ENCODE measurements at regions of chr4 and their contacts with region 1.

Region 1: DNA sequence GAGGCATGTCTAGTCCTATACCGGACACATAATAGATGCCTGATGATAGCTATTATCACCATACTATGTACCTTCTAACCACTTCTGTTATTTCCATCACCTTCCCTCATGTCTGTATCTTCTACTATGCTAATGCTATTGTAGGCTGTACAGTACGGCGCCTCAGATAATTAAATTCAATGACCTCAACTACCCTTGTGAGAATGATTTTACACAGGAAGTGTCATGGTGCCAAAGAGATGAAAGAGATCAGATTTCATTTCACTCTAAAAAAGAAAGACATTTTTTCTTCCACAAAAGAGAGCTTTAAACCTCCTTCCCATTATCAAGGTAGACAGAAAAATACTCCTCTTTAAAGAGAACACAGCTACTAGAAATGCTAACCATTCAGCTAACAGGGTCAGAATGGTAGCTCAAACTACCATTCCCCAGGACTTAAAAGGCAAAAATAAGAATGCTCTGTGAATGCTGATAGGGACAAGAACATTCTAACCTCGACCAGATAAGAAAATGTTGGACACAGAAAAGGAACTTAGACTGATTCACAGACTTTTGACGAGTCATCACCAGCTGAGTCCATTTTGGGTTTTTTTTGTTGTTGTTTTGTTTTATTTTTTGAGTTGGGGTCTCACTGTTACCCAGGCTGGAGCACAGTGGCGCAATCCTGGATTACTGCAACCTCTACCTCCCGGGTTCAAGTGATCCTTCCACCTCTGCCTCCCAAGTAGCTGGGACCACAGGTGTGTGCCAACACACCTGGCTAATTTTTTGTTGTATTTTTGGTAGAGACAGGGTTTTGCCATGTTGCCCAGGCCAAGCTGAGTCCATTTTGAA is 99.2 kb upstream of the RAPGEF2 start:
- DNase-seq: peak; percentile 81
- H3K4me3 ChIP-seq: peak overlapping the region in 1 of 3 experiments; percentile 49
- H3K27ac ChIP-seq: peak overlapping the region; percentile 94
- H3K4me1 ChIP-seq: peaks cover 21% of the 10 kb centered on the region
- H3K27me3 ChIP-seq: no peaks in the 10 kb centered on the region
- CTCF ChIP-seq: no peak
- POLR2A ChIP-seq: no peak

Region 2: GRCh38 chr4:158521484-158522088 is 482.1 kb before region 1 on chr4 and contains the start of gene RXFP1:
- CTCF ChIA-PET with region 1: no interaction called
- POLR2A ChIA-PET with region 1: no interaction called
- dilution Hi-C with region 1: no loop called
- intact Hi-C with region 1: no loop called
- DNase-seq: peak; percentile 28
- H3K4me3 ChIP-seq: peak within 1 kb of the TSS in 1 of 3 experiments; percentile 35
- H3K27ac ChIP-seq: no peak within 1 kb of the TSS
- H3K4me1 ChIP-seq: no peaks in the 10 kb centered on the region
- H3K27me3 ChIP-seq: no peaks in the 10 kb centered on the region
- CTCF ChIP-seq: no peak
- POLR2A ChIP-seq: no peak
- total RNA-seq, gene RXFP1: not detected in 2 replicates

Region 3: GRCh38 chr4:159048166-159048886 is 44.7 kb after region 1 on chr4:
- CTCF ChIA-PET with region 1: no interaction called
- POLR2A ChIA-PET with region 1: no interaction called
- dilution Hi-C with region 1: no loop called
- intact Hi-C with region 1: loop called (anchors 1 kb)
- DNase-seq: peak; percentile 89
- H3K4me3 ChIP-seq: peak overlapping the region; percentile 11 to 68 (median 17)
- H3K27ac ChIP-seq: peak overlapping the region; percentile 74
- H3K4me1 ChIP-seq: peaks cover 13% of the 10 kb centered on the region
- H3K27me3 ChIP-seq: no peaks in the 10 kb centered on the region
- CTCF ChIP-seq: no peak
- POLR2A ChIP-seq: no peak

Region 4: GRCh38 chr4:159126716-159127115 is 123.1 kb after region 1 on chr4:
- CTCF ChIA-PET with region 1: no interaction called
- POLR2A ChIA-PET with region 1: no interaction called
- dilution Hi-C with region 1: no loop called
- intact Hi-C with region 1: no loop called
- DNase-seq: no peak
- H3K4me3 ChIP-seq: no peak overlapping the region
- H3K27ac ChIP-seq: no peak overlapping the region
- H3K4me1 ChIP-seq: no peaks in the 10 kb centered on the region
- H3K27me3 ChIP-seq: no peaks in the 10 kb centered on the region
- CTCF ChIP-seq: no peak
- POLR2A ChIP-seq: no peak

Region 5: DNA sequence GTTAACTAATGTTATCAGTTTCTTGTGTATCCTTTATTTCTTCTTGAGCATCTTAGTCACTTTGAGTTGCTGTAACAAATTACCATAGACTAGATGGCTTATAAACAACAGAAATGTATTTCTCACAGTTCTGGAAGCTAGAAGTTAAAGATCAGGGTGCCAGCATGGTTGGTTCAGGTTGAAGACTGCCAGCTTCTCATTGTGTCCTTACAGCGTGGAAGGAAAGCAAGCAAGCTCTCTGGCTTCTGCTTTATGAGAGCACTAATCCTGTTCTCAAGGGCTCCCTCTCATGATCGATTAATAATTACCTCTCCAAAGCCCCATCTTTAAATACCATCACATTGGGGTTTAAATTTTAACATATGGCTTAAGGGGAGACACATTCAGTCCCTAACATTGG is 596.4 kb after region 1 on chr4:
- CTCF ChIA-PET with region 1: no interaction called
- POLR2A ChIA-PET with region 1: no interaction called
- dilution Hi-C with region 1: no loop called
- intact Hi-C with region 1: no loop called
- DNase-seq: no peak
- H3K4me3 ChIP-seq: no peak overlapping the region
- H3K27ac ChIP-seq: no peak overlapping the region
- H3K4me1 ChIP-seq: no peaks in the 10 kb centered on the region
- H3K27me3 ChIP-seq: no peaks in the 10 kb centered on the region
- CTCF ChIP-seq: no peak
- POLR2A ChIP-seq: no peak